H1 (cell line): ENCODE measurements at regions of chr12 and their contacts with region 1.

Region 1: GRCh38 chr12:79618848-79619404 is 71.8 kb downstream of the PAWR start:
- DNase-seq: no peak
- H3K4me3 ChIP-seq: no peak overlapping the region
- H3K27ac ChIP-seq: no peak overlapping the region
- H3K4me1 ChIP-seq: peaks cover 0 to 3% (median 2%) of the 10 kb centered on the region in 4 experiments; a peak in 2 of 7 replicates
- H3K27me3 ChIP-seq: no peaks in the 10 kb centered on the region
- CTCF ChIP-seq: no peak
- EP300 ChIP-seq: no peak
- POLR2A ChIP-seq: no peak
- RAD21 ChIP-seq: no peak

Region 2: GRCh38 chr12:79555028-79555930 is 63.6 kb before region 1 on chr12:
- CTCF ChIA-PET with region 1: no interaction called
- POLR2A ChIA-PET with region 1: no interaction called
- DNase-seq: no peak
- H3K4me3 ChIP-seq: no peak overlapping the region
- H3K27ac ChIP-seq: no peak overlapping the region
- H3K4me1 ChIP-seq: peaks cover 0 to 11% (median 4%) of the 10 kb centered on the region in 4 experiments; a peak in 4 of 7 replicates
- H3K27me3 ChIP-seq: no peaks in the 10 kb centered on the region
- CTCF ChIP-seq: peak in 2 of 3 experiments; percentile 40 to 41; a peak in 2 of 4 replicates
- EP300 ChIP-seq: no peak
- POLR2A ChIP-seq: no peak
- RAD21 ChIP-seq: peak; percentile 68 to 76

Region 3: DNA sequence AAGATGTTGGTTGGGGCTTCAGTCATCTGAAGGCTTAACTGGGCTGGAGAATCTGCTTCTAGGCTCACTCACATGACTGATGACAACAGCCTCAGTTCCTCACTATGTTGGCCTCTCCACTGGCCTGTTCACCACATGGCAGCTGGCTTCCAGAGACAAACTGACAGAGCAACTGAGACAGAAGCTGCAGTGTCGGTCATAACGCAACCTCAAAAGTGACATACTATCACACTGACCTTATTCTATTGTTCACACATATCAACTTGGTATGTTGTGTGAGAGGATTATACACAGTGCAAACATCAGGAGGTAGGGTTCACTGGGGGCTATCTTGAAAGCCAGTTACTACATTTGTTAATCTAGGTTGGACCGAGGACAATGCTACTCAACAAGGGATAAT is 21.0 kb before region 1 on chr12:
- CTCF ChIA-PET with region 1: interaction called, 10 read pairs
- POLR2A ChIA-PET with region 1: no interaction called
- DNase-seq: no peak
- H3K4me3 ChIP-seq: no peak overlapping the region
- H3K27ac ChIP-seq: no peak overlapping the region
- H3K4me1 ChIP-seq: peaks cover 0 to 3% (median 1%) of the 10 kb centered on the region in 4 experiments; a peak in 1 of 7 replicates
- H3K27me3 ChIP-seq: no peaks in the 10 kb centered on the region
- CTCF ChIP-seq: 0 out of 4 replicates have a peak, but pooled peaks of 1 of the 3 experiments have one; percentile 3
- EP300 ChIP-seq: no peak
- POLR2A ChIP-seq: no peak
- RAD21 ChIP-seq: no peak

Region 4: GRCh38 chr12:79818856-79819255 is 199.9 kb after region 1 on chr12:
- CTCF ChIA-PET with region 1: no interaction called
- POLR2A ChIA-PET with region 1: no interaction called
- DNase-seq: no peak
- H3K4me3 ChIP-seq: no peak overlapping the region
- H3K27ac ChIP-seq: no peak overlapping the region
- H3K4me1 ChIP-seq: no peaks in the 10 kb centered on the region
- H3K27me3 ChIP-seq: no peaks in the 10 kb centered on the region
- CTCF ChIP-seq: no peak
- EP300 ChIP-seq: no peak
- POLR2A ChIP-seq: no peak
- RAD21 ChIP-seq: no peak